T-cell (primary cell): ENCODE measurements at regions of chr1 and their contacts with region 1.

Region 1: DNA sequence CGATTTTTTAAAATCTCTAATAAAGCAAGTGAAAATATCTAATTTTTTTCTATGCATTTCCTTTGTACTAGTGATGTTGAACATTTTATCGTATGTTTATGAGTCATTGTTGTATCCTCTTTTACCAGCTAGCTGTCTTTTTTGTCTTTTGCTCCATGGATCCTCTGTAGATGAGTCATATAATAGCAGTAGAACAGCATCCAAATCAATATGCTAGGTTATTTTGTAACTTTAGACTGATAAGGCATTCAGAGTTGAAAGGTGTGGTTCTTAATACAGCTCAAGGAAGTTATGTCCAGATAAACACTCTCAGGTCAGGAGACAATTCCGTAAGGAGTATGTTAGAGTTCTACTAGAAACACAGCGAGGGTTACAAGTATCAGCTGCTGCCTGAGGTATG is 31.9 kb downstream of the MAP10 start:
- DNase-seq: no peak
- ATAC-seq: no peak
- H3K4me3 ChIP-seq: no peak overlapping the region
- H3K4me3 Mint-ChIP-seq: no peak overlapping the region
- H3K27ac ChIP-seq: no peak overlapping the region
- H3K27ac Mint-ChIP-seq: no peak overlapping the region
- H3K4me1 ChIP-seq: no peaks in the 10 kb centered on the region
- H3K4me1 Mint-ChIP-seq: no peaks in the 10 kb centered on the region
- H3K27me3 ChIP-seq: no peaks in the 10 kb centered on the region
- H3K27me3 Mint-ChIP-seq: peaks cover 4% of the 10 kb centered on the region in 2 donors

Region 2: DNA sequence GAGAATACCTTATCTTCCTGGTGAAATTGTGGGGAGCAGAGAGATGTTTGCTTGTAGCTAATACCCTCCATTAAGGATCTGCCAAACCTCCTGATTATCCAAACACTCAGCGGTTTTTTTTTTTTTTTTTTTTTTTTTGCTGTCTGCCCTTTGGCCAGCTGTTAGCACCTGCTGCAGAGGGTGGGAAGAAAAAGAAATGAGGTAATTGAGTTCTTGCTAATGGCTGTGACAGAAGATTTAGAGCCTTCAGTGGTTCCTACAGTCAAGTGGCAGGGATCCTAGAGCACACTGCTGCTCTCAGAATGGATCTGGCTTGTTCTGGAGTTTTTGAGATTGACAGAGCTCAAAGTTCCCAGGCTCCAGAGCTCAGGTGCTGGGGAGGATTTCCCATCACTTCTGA is 868.0 kb before region 1 on chr1:
- CTCF ChIA-PET with region 1: interaction called in 1 of 2 experiments, 12 read pairs
- POLR2A ChIA-PET with region 1: no interaction called
- DNase-seq: no peak
- ATAC-seq: no peak
- H3K4me3 ChIP-seq: no peak overlapping the region
- H3K4me3 Mint-ChIP-seq: no peak overlapping the region
- H3K27ac ChIP-seq: no peak overlapping the region
- H3K27ac Mint-ChIP-seq: no peak overlapping the region
- H3K4me1 ChIP-seq: peaks cover 5 to 10% of the 10 kb centered on the region in 2 experiments
- H3K4me1 Mint-ChIP-seq: peaks cover 5 to 23% (median 17%) of the 10 kb centered on the region in 3 donors
- H3K27me3 ChIP-seq: no peaks in the 10 kb centered on the region
- H3K27me3 Mint-ChIP-seq: no peaks in the 10 kb centered on the region

Region 3: DNA sequence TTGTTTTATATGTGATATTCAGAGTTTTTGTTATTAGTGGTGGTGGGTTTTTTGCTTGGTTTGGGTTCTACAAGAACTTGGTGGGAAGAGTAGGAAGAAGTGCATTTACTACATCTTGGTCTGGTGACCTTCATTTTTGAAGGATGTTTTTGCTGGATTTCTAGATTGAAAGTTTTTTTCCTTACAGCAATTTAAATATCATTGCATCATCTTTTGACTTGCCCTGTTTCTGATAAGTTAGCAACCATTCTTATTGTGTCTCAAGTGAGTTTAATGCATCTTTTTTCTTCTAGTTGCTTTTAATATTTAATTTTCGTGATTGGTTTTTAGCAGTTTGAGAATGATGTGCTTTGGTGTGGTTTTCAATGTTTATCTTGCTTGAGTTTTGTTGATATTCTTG is 762.8 kb before region 1 on chr1:
- CTCF ChIA-PET with region 1: no interaction called
- POLR2A ChIA-PET with region 1: no interaction called
- DNase-seq: no peak
- ATAC-seq: no peak
- H3K4me3 ChIP-seq: no peak overlapping the region
- H3K4me3 Mint-ChIP-seq: no peak overlapping the region
- H3K27ac ChIP-seq: no peak overlapping the region
- H3K27ac Mint-ChIP-seq: no peak overlapping the region
- H3K4me1 ChIP-seq: no peaks in the 10 kb centered on the region
- H3K4me1 Mint-ChIP-seq: no peaks in the 10 kb centered on the region
- H3K27me3 ChIP-seq: no peaks in the 10 kb centered on the region
- H3K27me3 Mint-ChIP-seq: peaks cover 8 to 18% of the 10 kb centered on the region in 2 donors